ENCODE measurements at regions of chr17 and their contacts with region 1.

Region 1: GRCh38 chr17:42126836-42127235 is 4.2 kb downstream of the HSPB9 start:
- DNase-seq: no peak
- ATAC-seq: no peak

Region 2: DNA sequence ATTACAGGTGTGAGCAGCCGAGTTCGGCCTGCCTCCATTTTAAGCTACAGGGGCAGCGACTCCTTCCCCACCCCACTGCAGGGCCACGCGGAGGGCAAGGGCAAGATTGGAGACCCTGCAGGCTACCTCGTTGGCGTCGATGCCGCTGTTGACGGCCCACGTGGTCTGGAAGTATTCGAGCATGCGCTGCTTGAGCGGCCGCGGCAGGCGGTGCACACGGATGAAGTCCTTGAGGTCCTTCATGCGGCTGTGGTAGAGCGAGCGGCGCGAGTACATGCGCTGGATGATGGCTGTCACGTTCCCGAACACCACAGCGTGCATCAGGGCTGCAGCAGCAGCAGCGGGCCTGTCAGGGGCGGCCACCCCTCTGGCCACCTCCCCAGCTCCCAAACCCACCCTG is 42.5 kb after region 1 on chr17:
- intact Hi-C with region 1: loop called (anchors 1 kb)
- DNase-seq: no peak
- ATAC-seq: no peak